Caco-2 (cell line): ENCODE measurements at regions of chr17 and their contacts with region 1.

Region 1: DNA sequence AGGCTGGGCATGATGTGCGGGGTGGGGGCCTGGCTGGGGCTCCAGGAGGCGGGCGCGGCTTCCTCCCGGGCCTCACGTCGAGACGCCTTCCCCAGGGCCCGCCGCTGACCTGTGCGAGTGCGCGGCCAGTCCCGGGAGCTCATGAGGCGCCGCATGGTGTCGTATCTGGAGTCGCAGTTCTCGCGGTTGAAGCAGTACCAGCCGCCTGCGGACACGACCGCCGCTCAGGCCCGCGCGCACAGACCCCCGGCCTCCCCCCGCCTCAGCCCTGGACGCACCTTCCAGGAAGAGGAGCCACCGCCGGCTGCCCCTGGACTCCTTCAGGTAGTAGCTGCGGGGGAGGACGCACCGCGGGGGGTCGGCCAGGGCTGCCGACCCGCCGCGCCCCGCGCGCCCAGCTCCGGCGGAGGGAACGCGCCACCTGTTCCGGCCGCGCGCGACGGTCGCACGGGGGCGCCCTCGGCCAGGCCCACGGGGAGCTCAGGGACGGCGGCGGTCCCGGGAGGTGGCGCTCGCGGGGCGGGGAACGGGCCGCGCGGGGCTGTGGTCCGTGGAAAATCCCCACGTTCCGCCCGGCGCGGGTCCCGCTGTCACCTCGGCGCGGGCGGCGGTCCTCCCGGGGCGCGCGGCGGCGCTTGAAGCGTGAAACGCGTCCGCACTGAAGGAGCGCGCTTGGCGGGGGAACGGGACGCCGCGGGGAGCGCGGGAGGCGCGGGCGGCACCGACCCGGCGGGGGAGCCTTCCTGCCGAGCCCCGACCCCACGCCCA is 1.4 kb downstream of the NOTUM start:
- DNase-seq: peak in 1 of 2 experiments; percentile 88
- H3K4me3 ChIP-seq: peak overlapping the region; percentile 65
- H3K4me3 Mint-ChIP-seq: peak overlapping the region; percentile 70
- H3K27ac Mint-ChIP-seq: no peak overlapping the region
- H3K4me1 ChIP-seq: peaks cover 33% of the 10 kb centered on the region
- H3K4me1 Mint-ChIP-seq: peaks cover 6% of the 10 kb centered on the region
- H3K27me3 ChIP-seq: 0 out of 2 replicates have a peak, but pooled peaks cover 1% of the 10 kb centered on the region
- H3K27me3 Mint-ChIP-seq: no peaks in the 10 kb centered on the region
- CTCF ChIP-seq: peak; percentile 62 to 87

Region 2: GRCh38 chr17:81977211-81978027 is 17.9 kb after region 1 on chr17 and contains the start of gene ASPSCR1:
- CTCF ChIA-PET with region 1: interaction called, 11 read pairs
- POLR2A ChIA-PET with region 1: interaction called, 6 read pairs
- intact Hi-C with region 1: no loop called
- DNase-seq: peak; percentile 90 to 96
- H3K4me3 ChIP-seq: peak within 1 kb of the TSS; percentile 79
- H3K4me3 Mint-ChIP-seq: peak within 1 kb of the TSS; percentile 98
- H3K27ac Mint-ChIP-seq: peak within 1 kb of the TSS; percentile 97
- H3K4me1 ChIP-seq: peaks cover 8% of the 10 kb centered on the region; the same call in 1 of the 2 replicates
- H3K4me1 Mint-ChIP-seq: peaks cover 5% of the 10 kb centered on the region
- H3K27me3 ChIP-seq: no peaks in the 10 kb centered on the region
- H3K27me3 Mint-ChIP-seq: no peaks in the 10 kb centered on the region
- CTCF ChIP-seq: no peak
- total RNA-seq, gene ASPSCR1: 58.0 and 59.2 TPM in 2 replicates

Region 3: DNA sequence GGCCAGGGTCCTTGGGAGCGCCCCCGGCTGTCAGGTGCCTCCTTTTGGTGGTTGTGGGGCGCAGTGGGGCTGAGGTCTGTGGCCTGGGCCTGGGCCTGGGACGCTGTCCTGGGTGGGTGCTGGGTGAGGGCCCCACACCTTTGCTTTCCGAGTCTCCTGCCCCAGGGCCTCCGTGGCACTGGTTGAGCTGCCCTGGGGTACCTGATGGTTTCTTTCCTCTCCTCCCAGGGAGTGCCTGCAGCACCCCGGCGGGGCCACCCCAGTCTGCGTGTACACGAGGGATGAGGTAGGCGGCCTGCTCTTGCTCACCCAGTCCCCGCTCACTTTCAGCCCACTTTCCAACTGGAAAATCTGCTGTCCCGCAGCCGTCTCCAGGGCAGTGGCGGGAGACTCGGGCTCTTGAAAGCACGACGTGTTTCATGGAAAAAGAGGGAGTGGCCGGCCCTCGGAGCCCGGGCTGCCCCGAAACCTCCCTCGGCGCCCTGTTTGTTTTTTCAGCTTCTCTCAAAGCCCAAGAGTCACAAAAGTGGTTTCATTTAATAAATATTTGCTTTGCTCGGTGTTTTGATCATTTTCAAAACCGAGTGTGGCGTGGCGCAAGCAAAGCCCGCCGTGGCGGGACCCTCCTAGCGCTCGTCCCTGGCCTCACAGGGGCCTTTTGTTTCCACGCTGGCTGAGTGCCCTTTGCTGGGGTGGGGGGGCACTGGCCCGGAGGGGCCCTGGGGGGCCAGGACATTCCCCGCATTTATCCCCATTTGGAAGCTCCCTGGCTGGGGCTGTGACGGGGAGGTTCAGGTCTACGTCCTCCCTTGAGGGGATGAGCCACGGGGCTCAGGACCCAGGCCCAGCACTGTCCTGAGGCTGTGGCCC is 35.3 kb after region 1 on chr17:
- CTCF ChIA-PET with region 1: interaction called, 16 read pairs
- POLR2A ChIA-PET with region 1: no interaction called
- intact Hi-C with region 1: no loop called
- DNase-seq: no peak
- H3K4me3 ChIP-seq: no peak overlapping the region
- H3K4me3 Mint-ChIP-seq: no peak overlapping the region
- H3K27ac Mint-ChIP-seq: no peak overlapping the region
- H3K4me1 ChIP-seq: peaks cover 18% of the 10 kb centered on the region; the same call in 1 of the 2 replicates
- H3K4me1 Mint-ChIP-seq: peaks cover 6% of the 10 kb centered on the region
- H3K27me3 ChIP-seq: no peaks in the 10 kb centered on the region
- H3K27me3 Mint-ChIP-seq: no peaks in the 10 kb centered on the region
- CTCF ChIP-seq: no peak

Region 4: GRCh38 chr17:82030470-82031302 is 71.1 kb after region 1 on chr17:
- CTCF ChIA-PET with region 1: interaction called, 17 read pairs
- POLR2A ChIA-PET with region 1: no interaction called
- intact Hi-C with region 1: no loop called
- DNase-seq: peak; percentile 89 to 93
- H3K4me3 ChIP-seq: peak overlapping the region; percentile 64
- H3K4me3 Mint-ChIP-seq: peak overlapping the region; percentile 85
- H3K27ac Mint-ChIP-seq: peak overlapping the region; percentile 80
- H3K4me1 ChIP-seq: peaks cover 14% of the 10 kb centered on the region
- H3K4me1 Mint-ChIP-seq: peaks cover 11% of the 10 kb centered on the region
- H3K27me3 ChIP-seq: no peaks in the 10 kb centered on the region
- H3K27me3 Mint-ChIP-seq: no peaks in the 10 kb centered on the region
- CTCF ChIP-seq: peak; percentile 91

Region 5: DNA sequence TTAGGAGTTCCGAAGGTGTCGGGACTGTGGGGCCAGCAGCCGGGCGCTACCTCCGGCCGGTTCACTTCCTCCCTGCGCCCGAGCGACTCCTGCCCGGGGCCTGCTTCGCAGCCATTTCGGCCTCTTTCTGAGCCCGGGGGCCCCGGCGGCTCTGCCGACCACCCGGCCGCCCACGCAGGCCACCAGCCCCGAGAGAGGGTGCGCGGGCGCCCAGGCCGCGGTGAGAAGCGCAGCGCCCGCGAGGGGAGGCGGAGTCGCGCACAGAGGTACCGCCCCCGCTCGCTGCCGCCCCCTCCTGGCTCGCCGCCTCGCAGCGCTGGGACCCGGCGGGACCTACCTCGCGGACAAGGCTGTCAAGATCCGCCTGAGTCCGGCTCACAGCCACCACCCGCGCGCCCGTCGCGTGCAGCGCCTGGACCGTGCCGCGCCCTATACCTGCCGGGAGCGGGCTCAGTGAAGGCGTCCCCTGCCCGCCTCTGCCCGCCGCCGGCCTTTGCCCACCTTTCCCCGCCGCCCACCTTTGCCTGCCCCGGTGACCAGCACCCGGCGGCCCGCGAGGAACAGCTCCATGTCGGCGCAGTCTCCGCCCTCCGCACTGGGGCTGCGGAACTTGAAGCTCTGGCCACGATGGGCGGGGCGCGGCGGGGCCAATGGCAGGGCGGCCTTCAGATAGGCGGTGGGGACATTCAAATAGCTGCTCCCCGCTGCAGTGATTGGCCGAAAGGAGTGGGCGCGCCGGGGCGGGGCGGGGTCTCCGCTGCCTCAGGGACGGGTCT is 77.8 kb after region 1 on chr17 and contains the start of gene DCXR:
- CTCF ChIA-PET with region 1: interaction called, 18 read pairs
- POLR2A ChIA-PET with region 1: interaction called, 7 read pairs
- intact Hi-C with region 1: no loop called
- DNase-seq: peak; percentile 98 to 99
- H3K4me3 ChIP-seq: peak within 1 kb of the TSS; percentile 79
- H3K4me3 Mint-ChIP-seq: peak within 1 kb of the TSS; percentile 86
- H3K27ac Mint-ChIP-seq: peak within 1 kb of the TSS; percentile 91
- H3K4me1 ChIP-seq: peaks cover 21% of the 10 kb centered on the region
- H3K4me1 Mint-ChIP-seq: peaks cover 5% of the 10 kb centered on the region
- H3K27me3 ChIP-seq: no peaks in the 10 kb centered on the region
- H3K27me3 Mint-ChIP-seq: no peaks in the 10 kb centered on the region
- CTCF ChIP-seq: peak; percentile 80 to 87
- total RNA-seq, gene DCXR: 197 and 208 TPM in 2 replicates